Activated CD4-positive, alpha-beta memory T cell treated with anti-CD3 and anti-CD28 coated beads, Interleukin-2, amount 10 ng/mL, durations not matched to agents 7 days and 5 days (primary cell): ENCODE measurements at regions of chr16 and their contacts with region 1.

Region 1: DNA sequence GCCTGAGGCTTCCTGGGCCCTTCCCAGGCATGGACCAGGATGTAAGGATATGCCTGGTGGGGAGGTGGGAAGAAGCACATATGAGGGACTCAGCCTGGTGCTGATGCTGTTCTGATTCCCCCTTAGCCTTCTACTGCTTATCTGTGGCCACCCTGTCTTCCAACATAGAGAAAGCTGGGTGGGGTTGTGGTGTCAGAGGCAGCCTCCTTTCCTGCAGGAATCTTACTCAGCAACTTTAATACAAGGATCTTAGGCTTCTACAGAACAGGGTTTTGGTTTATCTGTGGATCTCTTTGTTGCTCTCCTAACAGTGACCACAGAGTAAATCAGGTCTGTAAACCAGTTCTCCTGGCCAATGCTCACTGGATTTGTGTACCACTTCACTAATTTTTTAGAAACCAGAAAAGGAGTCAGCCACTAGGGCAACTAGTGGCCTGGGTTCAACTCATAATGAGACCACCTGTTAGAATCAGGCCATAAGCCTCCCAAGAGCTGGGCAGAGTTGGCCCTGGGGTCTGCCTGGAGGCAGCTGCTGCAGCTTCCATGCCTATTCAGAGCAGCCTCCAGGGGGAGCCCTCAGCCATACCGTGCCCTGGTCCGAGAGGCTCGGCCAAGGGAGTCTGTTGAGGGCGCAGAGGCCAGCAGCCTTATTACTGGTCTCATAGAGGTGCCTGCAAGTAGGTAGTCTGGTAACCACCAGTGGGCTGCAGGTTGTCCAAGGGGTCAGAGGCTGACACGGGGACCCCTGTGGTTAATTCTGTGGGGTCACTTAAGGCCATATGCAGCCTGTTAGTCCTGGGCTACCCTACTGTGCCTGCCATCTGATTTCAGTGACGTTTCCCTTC is 7.1 kb downstream of the HAS3 start:
- DNase-seq: peak; percentile 46
- H3K4me3 Mint-ChIP-seq: no peak overlapping the region
- H3K27ac Mint-ChIP-seq: no peak overlapping the region
- H3K4me1 Mint-ChIP-seq: peaks cover 3% of the 10 kb centered on the region
- H3K27me3 Mint-ChIP-seq: peaks cover 9% of the 10 kb centered on the region

Region 2: DNA sequence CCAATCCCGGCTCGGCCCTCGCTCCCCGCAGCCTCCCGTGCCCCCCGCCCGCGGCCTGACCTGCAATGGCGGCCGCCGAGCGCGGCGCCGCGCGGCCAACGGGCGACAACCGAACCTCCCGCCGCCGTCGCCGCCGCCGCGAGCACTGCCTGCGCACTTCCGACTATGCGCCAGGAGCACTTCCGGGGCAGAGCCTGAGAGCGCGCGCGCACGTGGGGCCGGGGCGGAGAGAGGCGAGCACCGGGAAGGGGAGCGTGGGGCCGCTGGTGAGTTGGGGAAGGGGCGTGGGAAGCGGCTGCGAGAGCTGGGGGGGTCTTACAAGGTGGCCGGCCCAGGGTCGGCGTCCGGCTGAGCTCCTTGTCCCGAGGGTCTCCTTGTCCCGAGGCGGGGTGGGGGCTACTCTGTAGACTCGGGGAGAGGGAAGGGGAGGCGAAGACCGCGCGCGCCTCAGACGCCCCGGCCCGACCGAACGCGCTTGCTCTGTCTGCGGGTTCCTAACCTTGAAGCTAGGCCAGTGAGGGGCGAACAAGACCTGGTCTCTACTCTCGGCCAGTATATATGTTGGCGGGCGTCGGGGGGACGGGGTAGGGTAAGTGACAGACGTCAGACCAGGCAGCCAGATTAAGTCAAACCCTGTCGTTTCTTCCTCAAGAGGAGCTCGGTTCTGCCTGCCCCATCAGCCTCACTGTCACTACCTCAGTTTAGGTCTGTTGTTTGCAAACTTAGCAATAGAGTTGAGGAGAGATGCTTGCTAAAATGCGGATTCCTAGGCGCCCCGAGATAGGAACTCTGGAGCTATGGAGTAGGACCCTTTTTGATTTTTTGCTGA is 20.1 kb after region 1 on chr16 and contains the starts of genes CHTF8 and UTP4:
- CTCF ChIA-PET with region 1: interaction called, 10 read pairs
- POLR2A ChIA-PET with region 1: interaction called, 7 read pairs
- DNase-seq: peak; percentile 88
- H3K4me3 Mint-ChIP-seq: peak within 1 kb of the TSS; percentile 93
- H3K27ac Mint-ChIP-seq: peak within 1 kb of the TSS; percentile 81
- H3K4me1 Mint-ChIP-seq: peaks cover 59% of the 10 kb centered on the region
- H3K27me3 Mint-ChIP-seq: no peaks in the 10 kb centered on the region
- total RNA-seq, gene CHTF8: 133 to 138 TPM
- total RNA-seq, gene UTP4: 39.7 to 48.7 TPM

Region 3: DNA sequence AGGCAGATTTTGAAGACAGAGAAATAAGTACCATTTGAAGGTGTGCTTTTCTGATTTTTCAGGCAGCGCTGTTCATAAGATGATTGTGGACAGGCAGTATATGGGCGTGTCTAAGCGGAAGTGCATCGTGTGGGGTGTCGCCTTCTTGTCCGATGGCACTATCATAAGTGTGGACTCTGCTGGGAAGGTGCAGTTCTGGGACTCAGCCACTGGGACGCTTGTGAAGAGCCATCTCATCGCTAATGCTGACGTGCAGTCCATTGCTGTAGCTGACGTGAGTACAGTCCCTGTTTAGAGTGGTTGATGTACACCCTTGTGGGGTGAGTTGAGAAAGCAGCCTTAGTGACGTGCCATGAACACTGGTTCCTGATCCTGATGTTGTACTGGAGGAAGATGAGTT is 30.6 kb after region 1 on chr16:
- CTCF ChIA-PET with region 1: no interaction called
- POLR2A ChIA-PET with region 1: no interaction called
- DNase-seq: no peak
- H3K4me3 Mint-ChIP-seq: no peak overlapping the region
- H3K27ac Mint-ChIP-seq: no peak overlapping the region
- H3K4me1 Mint-ChIP-seq: peaks cover 2% of the 10 kb centered on the region
- H3K27me3 Mint-ChIP-seq: no peaks in the 10 kb centered on the region